IMR-90 (cell line): ENCODE measurements at regions of chr17 and their contacts with region 1.

Region 1: GRCh38 chr17:29867643-29868181 is 62.3 kb downstream of the SSH2 start:
- DNase-seq: no peak
- ATAC-seq: no peak
- H3K4me3 ChIP-seq: no peak overlapping the region
- H3K27ac ChIP-seq: no peak overlapping the region
- H3K4me1 ChIP-seq: 0 out of 2 replicates have a peak, but pooled peaks cover 2% of the 10 kb centered on the region
- H3K27me3 ChIP-seq: no peaks in the 10 kb centered on the region
- CTCF ChIP-seq: peak; percentile 23; the same call in 1 of the 2 replicates
- POLR2A ChIP-seq: no peak
- RAD21 ChIP-seq: no peak

Region 2: GRCh38 chr17:29825604-29826003 is 42.1 kb before region 1 on chr17:
- CTCF ChIA-PET with region 1: no interaction called
- POLR2A ChIA-PET with region 1: no interaction called
- dilution Hi-C with region 1: no loop called
- in situ Hi-C with region 1: no loop called
- intact Hi-C with region 1: loop called (anchors 5 kb)
- DNase-seq: no peak
- ATAC-seq: no peak
- H3K4me3 ChIP-seq: no peak overlapping the region
- H3K27ac ChIP-seq: no peak overlapping the region
- H3K4me1 ChIP-seq: no peaks in the 10 kb centered on the region
- H3K27me3 ChIP-seq: no peaks in the 10 kb centered on the region
- CTCF ChIP-seq: no peak
- POLR2A ChIP-seq: no peak
- RAD21 ChIP-seq: no peak

Region 3: GRCh38 chr17:29909236-29910003 is 41.7 kb after region 1 on chr17:
- CTCF ChIA-PET with region 1: no interaction called
- POLR2A ChIA-PET with region 1: no interaction called
- dilution Hi-C with region 1: no loop called
- in situ Hi-C with region 1: no loop called
- intact Hi-C with region 1: no loop called
- DNase-seq: peak; percentile 52
- ATAC-seq: peak; percentile 44; the same call in 1 of the 2 replicates
- H3K4me3 ChIP-seq: no peak overlapping the region
- H3K27ac ChIP-seq: no peak overlapping the region
- H3K4me1 ChIP-seq: peaks cover 6% of the 10 kb centered on the region
- H3K27me3 ChIP-seq: no peaks in the 10 kb centered on the region
- CTCF ChIP-seq: no peak
- POLR2A ChIP-seq: no peak
- RAD21 ChIP-seq: no peak

Region 4: DNA sequence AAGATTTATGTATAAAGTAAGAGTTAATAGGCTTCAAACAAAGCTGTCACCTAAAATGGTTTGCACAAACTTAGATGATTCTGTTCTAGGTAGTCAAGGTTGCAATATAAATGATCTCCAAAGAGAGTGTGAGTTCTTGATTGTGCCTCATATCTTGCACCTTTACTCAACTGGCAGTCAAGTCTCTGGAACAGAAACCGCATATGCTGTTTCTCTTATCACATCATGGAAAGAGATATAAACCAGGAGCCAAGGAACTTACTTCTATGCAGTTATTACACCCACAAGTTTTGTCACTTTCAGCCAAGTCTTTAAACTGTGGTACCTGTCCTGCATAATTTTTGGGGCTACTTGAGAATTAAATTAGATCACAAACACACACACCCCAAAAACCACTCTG is 57.1 kb after region 1 on chr17:
- CTCF ChIA-PET with region 1: no interaction called
- POLR2A ChIA-PET with region 1: no interaction called
- dilution Hi-C with region 1: no loop called
- in situ Hi-C with region 1: no loop called
- intact Hi-C with region 1: no loop called
- DNase-seq: no peak
- ATAC-seq: no peak
- H3K4me3 ChIP-seq: no peak overlapping the region
- H3K27ac ChIP-seq: no peak overlapping the region
- H3K4me1 ChIP-seq: no peaks in the 10 kb centered on the region; the same call in 1 of the 2 replicates
- H3K27me3 ChIP-seq: no peaks in the 10 kb centered on the region
- CTCF ChIP-seq: no peak
- POLR2A ChIP-seq: no peak
- RAD21 ChIP-seq: no peak